Mucosa of descending colon (tissue), 3 donors: ENCODE measurements at regions of chr11 and their contacts with region 1.

Region 1: GRCh38 chr11:111777094-111778046 is 11.2 kb upstream of the PPP2R1B start:
- DNase-seq: peak in 1 of 3 donors; percentile 51
- ATAC-seq: peak; percentile 86
- H3K4me3 ChIP-seq: no peak overlapping the region
- H3K4me1 ChIP-seq: peaks cover 6% of the 10 kb centered on the region
- CTCF ChIP-seq: peak; percentile 24

Region 2: GRCh38 chr11:111531687-111532364 is 245.5 kb before region 1 on chr11:
- intact Hi-C with region 1: no loop called
- DNase-seq: no peak
- ATAC-seq: peak; percentile 48
- H3K4me3 ChIP-seq: no peak overlapping the region
- H3K4me1 ChIP-seq: no peaks in the 10 kb centered on the region
- CTCF ChIP-seq: no peak

Region 3: DNA sequence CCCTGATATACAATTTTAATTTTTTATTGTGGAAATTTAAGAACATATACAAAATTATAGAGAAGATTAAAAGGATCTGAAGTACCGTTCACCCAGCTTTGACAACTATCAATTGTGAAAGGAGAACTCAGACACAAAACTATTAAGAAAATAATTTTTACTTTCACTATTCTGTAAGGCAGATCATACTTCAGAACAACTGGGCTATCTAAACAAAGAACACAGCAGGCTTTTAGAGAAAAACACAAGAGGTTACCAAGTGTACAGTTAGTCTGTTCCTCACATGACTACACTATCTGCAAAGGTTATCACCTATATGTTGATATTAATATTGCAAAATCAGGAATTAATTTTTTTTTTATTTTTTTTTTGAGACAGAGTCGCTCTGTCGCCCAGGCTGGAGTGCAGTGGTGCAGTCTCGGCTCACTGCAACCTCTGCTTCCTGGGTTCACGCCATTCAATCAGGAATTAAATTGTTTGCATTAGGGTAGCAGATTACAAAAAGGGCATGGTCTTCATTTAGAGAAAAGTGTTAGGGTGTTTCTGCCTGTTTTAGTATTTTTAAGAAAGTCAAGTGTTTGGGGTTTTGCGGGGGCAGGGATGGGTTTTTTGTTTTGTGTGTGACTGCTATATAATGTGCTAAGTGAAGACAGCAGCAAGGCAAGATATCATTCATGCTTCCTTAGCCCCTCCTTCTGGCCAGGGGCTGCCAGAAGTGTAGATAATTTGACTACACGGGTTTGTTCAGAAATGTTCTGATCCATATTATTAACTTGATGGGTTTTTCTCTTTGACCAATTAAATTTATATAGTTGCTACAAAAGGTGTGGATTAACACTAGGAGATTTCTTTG is 202.8 kb before region 1 on chr11:
- intact Hi-C with region 1: no loop called
- DNase-seq: no peak
- ATAC-seq: no peak
- H3K4me3 ChIP-seq: no peak overlapping the region
- H3K4me1 ChIP-seq: no peaks in the 10 kb centered on the region
- CTCF ChIP-seq: no peak

Region 4: GRCh38 chr11:111601979-111602864 is 175.1 kb before region 1 on chr11 and contains the start of gene SIK2:
- intact Hi-C with region 1: loop called (anchors 5 kb)
- DNase-seq: peak; percentile 93 to 96 (median 94)
- ATAC-seq: peak; percentile 93
- H3K4me3 ChIP-seq: peak within 1 kb of the TSS; percentile 88
- H3K4me1 ChIP-seq: peaks cover 20% of the 10 kb centered on the region
- CTCF ChIP-seq: peak; percentile 82
- total RNA-seq, gene SIK2: 22.0 to 23.0 (median 22.7) TPM

Region 5: GRCh38 chr11:111926505-111927391 is 149.4 kb after region 1 on chr11:
- intact Hi-C with region 1: no loop called
- DNase-seq: peak; percentile 97 to 99 (median 99)
- ATAC-seq: peak; percentile 96
- H3K4me3 ChIP-seq: no peak overlapping the region
- H3K4me1 ChIP-seq: peaks cover 16% of the 10 kb centered on the region
- CTCF ChIP-seq: no peak